Caco-2 (cell line): ENCODE measurements at regions of chr10 and their contacts with region 1.

Region 1: DNA sequence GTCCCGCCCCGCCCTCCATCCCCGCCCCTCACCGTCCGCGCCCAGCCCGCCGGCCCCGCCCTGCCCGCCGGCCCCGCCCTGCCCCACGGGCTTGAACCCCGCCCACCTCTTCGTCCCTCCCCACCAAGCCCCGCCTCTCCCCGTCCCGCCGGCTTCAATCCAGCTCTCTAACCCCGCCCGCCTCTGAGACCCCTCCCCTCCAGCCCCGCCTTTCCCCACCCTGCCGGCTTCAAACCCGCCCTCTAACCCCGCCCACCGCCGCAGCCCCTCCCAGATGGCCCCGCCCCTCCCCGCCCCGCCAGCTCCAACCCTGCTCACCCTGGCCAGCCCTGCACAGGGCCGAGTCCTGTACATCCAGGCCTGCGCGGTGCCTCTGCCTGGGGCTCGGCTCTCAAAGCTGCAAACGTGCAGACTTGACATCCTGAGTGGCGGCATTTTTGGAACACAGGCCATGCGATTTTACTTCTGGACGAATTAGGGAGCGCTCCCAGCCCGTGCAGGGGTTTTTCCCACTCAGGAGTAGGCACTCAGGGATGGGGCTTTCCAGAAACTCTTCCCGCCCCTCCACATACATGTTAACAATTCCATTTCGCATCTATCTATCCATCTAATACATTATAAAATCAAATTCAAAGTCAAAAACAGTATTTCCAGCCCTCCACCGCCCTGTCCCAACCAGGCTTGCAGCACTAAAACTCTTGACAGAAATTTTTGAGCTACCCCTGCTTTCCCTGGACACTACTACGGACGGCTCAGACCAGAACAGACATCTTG is 475 bp upstream of the NMT2 start:
- DNase-seq: peak; percentile 97 to 99
- H3K4me3 ChIP-seq: peak overlapping the region; percentile 11
- H3K4me3 Mint-ChIP-seq: peak overlapping the region; percentile 80
- H3K27ac Mint-ChIP-seq: peak overlapping the region; percentile 79
- H3K4me1 ChIP-seq: peaks cover 5% of the 10 kb centered on the region; the same call in 1 of the 2 replicates
- H3K4me1 Mint-ChIP-seq: peaks cover 6% of the 10 kb centered on the region
- H3K27me3 ChIP-seq: no peaks in the 10 kb centered on the region
- H3K27me3 Mint-ChIP-seq: no peaks in the 10 kb centered on the region
- CTCF ChIP-seq: no peak

Region 2: DNA sequence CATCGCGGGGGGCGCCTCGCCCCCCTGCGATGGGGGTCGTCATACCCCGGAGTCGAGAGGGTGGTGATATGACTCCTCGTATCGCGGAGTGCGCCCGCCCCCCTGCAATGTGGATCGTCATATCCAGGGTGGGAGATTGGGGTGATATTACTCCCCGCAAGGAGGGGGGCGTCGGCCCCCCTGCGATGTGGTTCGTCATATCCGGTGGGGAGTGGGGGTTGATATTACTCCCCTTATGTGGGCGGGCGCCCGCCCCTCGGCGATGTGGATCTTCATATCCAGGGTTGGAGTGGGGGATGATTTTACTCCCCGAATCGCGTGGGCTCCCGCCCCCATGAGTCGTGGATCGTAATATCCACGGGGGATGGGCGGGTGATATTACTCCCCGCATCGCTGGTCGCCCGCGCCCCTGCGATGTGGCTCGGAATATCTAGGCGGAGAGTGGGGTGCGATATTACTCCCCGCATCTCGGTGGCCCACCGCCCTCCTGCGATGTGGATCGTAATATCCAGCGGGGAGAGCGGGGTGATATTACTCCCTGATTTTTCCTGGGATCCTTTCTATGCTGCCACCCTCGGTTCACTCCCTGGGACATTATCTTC is 172.9 kb before region 1 on chr10:
- CTCF ChIA-PET with region 1: no interaction called
- POLR2A ChIA-PET with region 1: no interaction called
- intact Hi-C with region 1: loop called (anchors 1 kb)
- DNase-seq: no peak
- H3K4me3 ChIP-seq: no peak overlapping the region
- H3K4me3 Mint-ChIP-seq: no peak overlapping the region
- H3K27ac Mint-ChIP-seq: no peak overlapping the region
- H3K4me1 ChIP-seq: peaks cover 28% of the 10 kb centered on the region
- H3K4me1 Mint-ChIP-seq: peaks cover 35% of the 10 kb centered on the region
- H3K27me3 ChIP-seq: no peaks in the 10 kb centered on the region
- H3K27me3 Mint-ChIP-seq: no peaks in the 10 kb centered on the region
- CTCF ChIP-seq: no peak

Region 3: DNA sequence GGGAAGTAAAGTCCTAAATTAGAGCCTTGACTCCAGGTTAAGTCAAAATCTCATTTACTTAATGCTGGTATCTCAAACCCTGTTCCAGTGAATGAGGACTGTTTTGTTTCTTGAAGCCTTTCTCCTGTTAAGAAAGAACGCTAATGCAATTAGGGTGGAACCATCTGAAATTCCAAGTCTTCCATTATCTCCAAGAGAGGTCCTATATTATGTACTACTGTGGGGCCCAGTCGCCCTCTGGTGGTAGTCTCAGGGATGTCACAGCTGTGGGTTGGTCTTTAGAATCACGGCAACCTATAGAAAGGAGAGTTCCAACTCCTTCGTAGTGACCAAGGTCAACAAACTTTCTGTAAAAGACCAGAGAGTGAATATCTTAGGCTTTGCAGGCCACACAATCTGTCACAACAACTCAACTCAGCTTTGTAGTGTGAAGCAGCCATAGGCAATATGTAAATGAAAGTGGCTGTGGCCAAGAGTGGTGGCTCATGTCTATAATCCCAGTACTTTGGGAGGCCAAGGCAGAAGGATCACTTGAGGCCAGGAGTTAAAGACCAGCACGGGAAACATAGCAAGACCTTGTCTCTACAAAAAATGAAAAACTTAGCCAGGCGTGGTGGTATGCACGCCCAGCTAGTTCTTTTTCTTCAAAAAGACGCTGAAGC is 62.5 kb before region 1 on chr10:
- CTCF ChIA-PET with region 1: no interaction called
- POLR2A ChIA-PET with region 1: interaction called, 12 read pairs
- intact Hi-C with region 1: loop called (anchors 5 kb)
- DNase-seq: peak; percentile 83 to 88
- H3K4me3 ChIP-seq: no peak overlapping the region
- H3K4me3 Mint-ChIP-seq: no peak overlapping the region
- H3K27ac Mint-ChIP-seq: no peak overlapping the region
- H3K4me1 ChIP-seq: 0 out of 2 replicates have a peak, but pooled peaks cover 7% of the 10 kb centered on the region
- H3K4me1 Mint-ChIP-seq: no peaks in the 10 kb centered on the region
- H3K27me3 ChIP-seq: no peaks in the 10 kb centered on the region
- H3K27me3 Mint-ChIP-seq: no peaks in the 10 kb centered on the region
- CTCF ChIP-seq: peak; percentile 94 to 97

Region 4: DNA sequence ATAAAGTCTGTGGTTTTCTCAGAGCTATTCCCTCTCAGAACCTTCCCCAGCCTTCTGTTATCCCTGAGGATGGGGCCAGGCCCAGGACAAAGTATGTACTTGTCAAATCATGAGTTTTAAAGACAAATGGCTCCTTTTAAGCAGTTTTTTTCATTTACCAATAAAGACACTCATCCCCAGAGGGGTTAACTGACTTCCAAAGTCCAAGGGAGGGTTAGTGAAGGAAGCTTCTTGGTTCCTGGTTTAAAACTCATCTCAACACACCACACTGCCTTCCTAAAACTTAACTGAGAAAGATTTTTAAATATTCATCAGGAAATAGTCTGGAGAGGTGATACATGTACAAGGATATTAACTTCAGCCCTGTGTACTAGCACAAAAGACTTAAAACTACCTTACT is 16.4 kb before region 1 on chr10:
- CTCF ChIA-PET with region 1: interaction called, 6 read pairs
- POLR2A ChIA-PET with region 1: interaction called, 6 read pairs
- intact Hi-C with region 1: loop called (anchors 1 kb)
- DNase-seq: no peak
- H3K4me3 ChIP-seq: no peak overlapping the region
- H3K4me3 Mint-ChIP-seq: no peak overlapping the region
- H3K27ac Mint-ChIP-seq: peak overlapping the region; percentile 60
- H3K4me1 ChIP-seq: peaks cover 18% of the 10 kb centered on the region
- H3K4me1 Mint-ChIP-seq: peaks cover 16% of the 10 kb centered on the region
- H3K27me3 ChIP-seq: no peaks in the 10 kb centered on the region
- H3K27me3 Mint-ChIP-seq: no peaks in the 10 kb centered on the region
- CTCF ChIP-seq: no peak

Region 5: DNA sequence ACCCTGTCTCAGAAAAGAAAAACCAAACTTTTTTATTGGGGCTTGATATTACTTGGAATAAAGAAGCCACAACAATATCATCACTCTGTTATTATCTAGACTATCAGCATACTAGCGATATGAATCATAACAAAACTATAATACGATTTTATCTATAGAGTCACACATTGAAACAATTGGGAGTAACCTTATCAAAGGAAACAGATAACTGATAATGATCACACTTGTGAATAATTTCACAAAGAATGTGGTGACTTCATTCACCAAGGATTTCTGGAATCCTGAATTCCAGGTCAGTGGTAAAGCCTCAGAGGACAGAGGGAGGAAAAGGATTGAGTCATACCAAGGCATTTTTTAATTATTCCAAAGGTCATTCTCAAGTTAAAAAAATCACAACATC is 31.7 kb after region 1 on chr10:
- CTCF ChIA-PET with region 1: no interaction called
- POLR2A ChIA-PET with region 1: no interaction called
- intact Hi-C with region 1: loop called (anchors 2 kb)
- DNase-seq: peak; percentile 55 to 77
- H3K4me3 ChIP-seq: no peak overlapping the region
- H3K4me3 Mint-ChIP-seq: peak overlapping the region; percentile 17
- H3K27ac Mint-ChIP-seq: peak overlapping the region; percentile 86
- H3K4me1 ChIP-seq: peaks cover 28% of the 10 kb centered on the region
- H3K4me1 Mint-ChIP-seq: peaks cover 24% of the 10 kb centered on the region
- H3K27me3 ChIP-seq: no peaks in the 10 kb centered on the region
- H3K27me3 Mint-ChIP-seq: no peaks in the 10 kb centered on the region
- CTCF ChIP-seq: no peak

Region 6: GRCh38 chr10:15245530-15245929 is 76.6 kb after region 1 on chr10:
- CTCF ChIA-PET with region 1: no interaction called
- POLR2A ChIA-PET with region 1: no interaction called
- intact Hi-C with region 1: loop called (anchors 2 kb)
- DNase-seq: peak in 1 of 2 experiments; percentile 48
- H3K4me3 ChIP-seq: no peak overlapping the region
- H3K4me3 Mint-ChIP-seq: no peak overlapping the region
- H3K27ac Mint-ChIP-seq: no peak overlapping the region
- H3K4me1 ChIP-seq: no peaks in the 10 kb centered on the region
- H3K4me1 Mint-ChIP-seq: no peaks in the 10 kb centered on the region
- H3K27me3 ChIP-seq: no peaks in the 10 kb centered on the region
- H3K27me3 Mint-ChIP-seq: no peaks in the 10 kb centered on the region
- CTCF ChIP-seq: peak; percentile 56 to 66

Region 7: GRCh38 chr10:15370856-15371701 is 202.1 kb after region 1 on chr10 and contains the start of gene FAM171A1:
- CTCF ChIA-PET with region 1: interaction called, 5 read pairs
- POLR2A ChIA-PET with region 1: no interaction called
- intact Hi-C with region 1: loop called (anchors 5 kb)
- DNase-seq: peak; percentile 64 to 83
- H3K4me3 ChIP-seq: peak within 1 kb of the TSS; percentile 66
- H3K4me3 Mint-ChIP-seq: peak within 1 kb of the TSS; percentile 87
- H3K27ac Mint-ChIP-seq: peak within 1 kb of the TSS; percentile 90
- H3K4me1 ChIP-seq: peaks cover 9% of the 10 kb centered on the region
- H3K4me1 Mint-ChIP-seq: peaks cover 11% of the 10 kb centered on the region
- H3K27me3 ChIP-seq: peaks cover 1% of the 10 kb centered on the region
- H3K27me3 Mint-ChIP-seq: peaks cover 5% of the 10 kb centered on the region
- CTCF ChIP-seq: peak; percentile 8 to 30
- total RNA-seq, gene FAM171A1: 26.3 and 27.9 TPM in 2 replicates